Activated CD8-positive, alpha-beta T cell treated with anti-CD3 and anti-CD28 coated beads for 36 hours (primary cell): ENCODE measurements at regions of chr12 and their contacts with region 1.

Region 1: DNA sequence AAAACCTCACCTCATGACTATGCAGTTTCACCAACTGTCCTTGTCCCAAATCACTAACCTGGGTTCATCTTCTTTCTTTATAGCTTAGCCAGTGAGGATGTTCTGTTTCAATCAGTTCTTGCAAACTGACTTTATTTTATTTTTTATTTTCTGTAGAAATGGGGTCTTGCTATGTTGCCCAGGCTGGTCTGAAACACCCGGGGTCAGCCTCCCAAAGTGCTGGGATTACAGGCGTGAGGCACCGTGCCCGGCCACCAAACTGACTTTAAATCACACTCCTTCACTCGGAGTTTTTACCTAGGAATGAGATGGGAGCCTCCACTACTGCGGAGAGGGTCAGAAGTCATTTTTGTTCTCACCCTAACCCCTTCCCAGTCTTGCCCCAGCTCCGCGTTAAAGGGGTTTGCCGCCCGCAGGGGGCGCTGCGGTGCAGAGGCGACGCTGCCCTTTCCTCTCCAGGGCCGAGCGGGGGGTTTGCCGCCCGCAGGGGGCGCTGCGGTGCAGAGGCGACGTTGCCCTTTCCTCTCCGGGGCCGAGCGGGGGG is 7.0 kb upstream of the B4GALNT3 start:
- DNase-seq: peak; percentile 91
- ATAC-seq: peak; percentile 40
- H3K4me3 Mint-ChIP-seq: no peak overlapping the region
- H3K27ac Mint-ChIP-seq: no peak overlapping the region
- H3K4me1 Mint-ChIP-seq: peaks cover 3% of the 10 kb centered on the region
- H3K27me3 Mint-ChIP-seq: peaks cover 9% of the 10 kb centered on the region
- CTCF ChIP-seq: no peak

Region 2: DNA sequence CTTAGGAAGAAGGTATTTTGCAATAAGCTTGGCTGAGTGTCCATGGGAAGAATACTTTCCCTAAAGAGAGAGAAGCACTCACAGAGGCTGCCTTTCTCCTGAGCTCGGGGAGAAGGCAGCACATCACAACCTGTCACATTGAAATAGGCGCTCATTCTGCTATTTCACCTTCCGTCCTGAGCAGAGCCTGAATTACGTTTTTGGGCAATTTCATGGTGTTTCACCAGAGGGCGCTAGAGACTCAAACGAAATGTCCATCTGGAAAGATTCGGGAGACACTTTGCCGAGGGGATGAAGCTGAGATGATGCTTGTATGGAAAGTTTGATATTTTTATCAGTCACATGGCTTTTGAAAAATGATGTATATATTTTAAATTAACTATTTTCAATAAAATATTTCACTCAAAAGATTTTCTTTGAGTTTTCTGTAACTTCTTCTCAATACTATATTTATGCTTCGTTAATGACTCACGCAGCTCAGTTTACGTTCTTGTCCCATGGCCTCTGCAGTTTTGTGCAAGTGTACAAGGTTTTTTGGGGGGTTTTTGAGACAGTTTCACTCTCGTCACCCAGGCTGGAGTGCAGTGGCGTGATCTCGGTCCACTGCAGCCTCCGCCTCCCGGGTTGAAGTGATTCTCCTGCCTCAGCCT is 10.4 kb before region 1 on chr12:
- CTCF ChIA-PET with region 1: interaction called, 32 read pairs
- POLR2A ChIA-PET with region 1: interaction called, 3 read pairs
- intact Hi-C with region 1: no loop called
- DNase-seq: peak; percentile 63
- ATAC-seq: peak; percentile 30
- H3K4me3 Mint-ChIP-seq: no peak overlapping the region
- H3K27ac Mint-ChIP-seq: no peak overlapping the region
- H3K4me1 Mint-ChIP-seq: no peaks in the 10 kb centered on the region
- H3K27me3 Mint-ChIP-seq: peaks cover 2% of the 10 kb centered on the region
- CTCF ChIP-seq: peak; percentile 96

Region 3: DNA sequence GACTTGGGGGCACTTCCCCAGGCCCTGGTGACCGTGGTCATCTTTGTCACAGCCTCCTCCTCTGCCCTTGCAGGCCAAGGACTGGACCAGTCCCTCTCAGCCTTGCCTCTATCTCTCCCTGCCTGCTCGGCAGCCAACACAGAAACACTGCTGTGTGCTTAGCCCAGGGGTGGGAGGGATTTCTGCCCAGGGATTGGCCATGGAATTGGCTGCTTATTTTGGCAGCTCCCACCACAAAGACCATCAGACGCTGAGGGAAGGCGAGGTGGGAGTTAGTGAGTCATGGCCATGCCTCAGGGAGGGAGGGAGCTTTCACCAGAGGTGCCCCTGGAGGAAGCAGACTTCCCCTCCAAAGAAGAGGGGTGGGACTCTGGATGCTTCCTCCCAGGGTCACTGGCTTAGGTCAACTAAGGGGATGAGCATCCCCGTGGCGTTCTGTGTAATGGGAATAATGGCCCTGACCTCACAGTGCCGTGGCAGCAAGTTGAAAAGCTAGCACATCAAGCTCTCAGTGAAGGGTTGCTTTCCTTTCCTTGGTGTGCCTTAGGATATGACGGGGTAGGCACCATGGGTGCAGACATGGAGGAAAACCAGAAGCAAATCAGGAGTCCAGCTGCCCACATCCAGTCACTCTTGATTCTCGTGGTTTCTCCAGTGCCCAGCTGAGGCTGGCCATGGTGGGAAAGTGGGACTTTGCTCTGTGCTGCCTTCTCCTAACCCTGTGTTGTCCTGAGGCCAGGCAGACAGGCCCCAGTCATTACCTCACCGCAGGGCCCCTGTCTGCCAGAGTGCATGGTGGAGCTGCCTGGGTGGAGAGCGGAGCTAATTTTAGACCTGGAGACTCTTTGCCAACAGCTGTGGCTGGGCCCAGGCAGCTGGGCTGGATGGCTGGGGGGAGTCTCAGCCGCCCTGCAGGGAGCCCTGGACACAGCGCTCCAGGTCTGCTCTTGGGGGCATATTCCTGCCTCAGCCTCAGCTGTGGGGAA is 28.4 kb after region 1 on chr12:
- CTCF ChIA-PET with region 1: interaction called, 12 read pairs
- POLR2A ChIA-PET with region 1: no interaction called
- intact Hi-C with region 1: no loop called
- DNase-seq: no peak
- ATAC-seq: no peak
- H3K4me3 Mint-ChIP-seq: no peak overlapping the region
- H3K27ac Mint-ChIP-seq: no peak overlapping the region
- H3K4me1 Mint-ChIP-seq: no peaks in the 10 kb centered on the region
- H3K27me3 Mint-ChIP-seq: peaks cover 17% of the 10 kb centered on the region
- CTCF ChIP-seq: no peak

Region 4: GRCh38 chr12:546921-547845 is 94.4 kb after region 1 on chr12:
- CTCF ChIA-PET with region 1: interaction called, 154 read pairs
- POLR2A ChIA-PET with region 1: interaction called, 3 read pairs
- intact Hi-C with region 1: loop called (anchors 5 kb)
- DNase-seq: peak; percentile 66
- ATAC-seq: peak; percentile 86
- H3K4me3 Mint-ChIP-seq: no peak overlapping the region
- H3K27ac Mint-ChIP-seq: no peak overlapping the region
- H3K4me1 Mint-ChIP-seq: peaks cover 19% of the 10 kb centered on the region
- H3K27me3 Mint-ChIP-seq: peaks cover 8% of the 10 kb centered on the region
- CTCF ChIP-seq: peak; percentile 97

Region 5: DNA sequence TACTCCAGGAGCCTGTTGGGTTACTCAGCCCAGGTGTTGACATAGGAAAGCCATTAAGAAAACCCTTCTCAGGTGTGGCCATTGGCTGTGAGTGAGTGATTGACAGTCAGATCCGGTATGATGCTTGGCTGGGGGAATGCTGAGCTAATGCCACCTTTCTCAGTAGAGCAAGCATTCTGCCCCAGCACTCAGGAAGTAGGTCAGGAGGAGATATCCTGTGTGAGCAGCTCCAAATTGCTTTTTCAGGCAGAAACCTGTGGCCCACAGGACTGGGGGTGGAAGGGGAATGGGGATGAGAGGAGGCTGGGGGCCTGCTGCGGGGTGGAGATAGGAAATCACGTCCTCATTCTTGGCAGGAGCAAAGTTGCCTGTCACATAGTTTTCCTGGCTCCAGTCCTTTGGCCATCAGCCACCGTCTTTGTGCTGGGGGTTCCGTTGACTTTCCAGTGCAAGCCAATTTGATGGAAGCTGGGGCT is 154.8 kb after region 1 on chr12:
- CTCF ChIA-PET with region 1: no interaction called
- POLR2A ChIA-PET with region 1: no interaction called
- intact Hi-C with region 1: no loop called
- DNase-seq: peak; percentile 18
- ATAC-seq: peak; percentile 31
- H3K4me3 Mint-ChIP-seq: no peak overlapping the region
- H3K27ac Mint-ChIP-seq: no peak overlapping the region
- H3K4me1 Mint-ChIP-seq: peaks cover 19% of the 10 kb centered on the region
- H3K27me3 Mint-ChIP-seq: no peaks in the 10 kb centered on the region
- CTCF ChIP-seq: no peak